Activated CD4-positive, alpha-beta T cell treated with anti-CD3 and anti-CD28 coated beads, Interleukin-2, amount 10 ng/mL, durations not matched to agents 7 days and 5 days (primary cell): ENCODE measurements at regions of chr1 and their contacts with region 1.

Region 1: DNA sequence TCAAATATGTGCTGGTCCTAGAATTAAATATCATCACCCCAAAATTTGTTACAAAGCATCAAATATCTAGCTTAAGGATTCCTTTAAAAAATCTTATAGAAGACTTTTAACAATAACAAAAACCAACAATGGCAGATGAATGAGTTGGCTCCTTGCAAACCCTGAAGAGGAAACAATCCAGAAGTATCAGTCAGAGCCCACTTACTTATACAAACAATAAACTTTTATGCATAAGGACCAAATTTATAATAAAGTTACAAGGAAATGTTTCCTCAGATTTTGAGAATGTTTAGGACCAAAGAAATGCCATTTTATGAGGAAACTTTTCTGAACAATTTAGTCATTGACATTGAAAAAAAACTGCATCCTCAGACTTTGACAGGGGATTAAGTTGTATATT is 52.7 kb downstream of the LPAR3 start:
- DNase-seq: no peak
- H3K4me3 Mint-ChIP-seq: no peak overlapping the region
- H3K27ac Mint-ChIP-seq: no peak overlapping the region
- H3K4me1 Mint-ChIP-seq: peaks cover 14% of the 10 kb centered on the region
- H3K27me3 Mint-ChIP-seq: peaks cover 15% of the 10 kb centered on the region

Region 2: DNA sequence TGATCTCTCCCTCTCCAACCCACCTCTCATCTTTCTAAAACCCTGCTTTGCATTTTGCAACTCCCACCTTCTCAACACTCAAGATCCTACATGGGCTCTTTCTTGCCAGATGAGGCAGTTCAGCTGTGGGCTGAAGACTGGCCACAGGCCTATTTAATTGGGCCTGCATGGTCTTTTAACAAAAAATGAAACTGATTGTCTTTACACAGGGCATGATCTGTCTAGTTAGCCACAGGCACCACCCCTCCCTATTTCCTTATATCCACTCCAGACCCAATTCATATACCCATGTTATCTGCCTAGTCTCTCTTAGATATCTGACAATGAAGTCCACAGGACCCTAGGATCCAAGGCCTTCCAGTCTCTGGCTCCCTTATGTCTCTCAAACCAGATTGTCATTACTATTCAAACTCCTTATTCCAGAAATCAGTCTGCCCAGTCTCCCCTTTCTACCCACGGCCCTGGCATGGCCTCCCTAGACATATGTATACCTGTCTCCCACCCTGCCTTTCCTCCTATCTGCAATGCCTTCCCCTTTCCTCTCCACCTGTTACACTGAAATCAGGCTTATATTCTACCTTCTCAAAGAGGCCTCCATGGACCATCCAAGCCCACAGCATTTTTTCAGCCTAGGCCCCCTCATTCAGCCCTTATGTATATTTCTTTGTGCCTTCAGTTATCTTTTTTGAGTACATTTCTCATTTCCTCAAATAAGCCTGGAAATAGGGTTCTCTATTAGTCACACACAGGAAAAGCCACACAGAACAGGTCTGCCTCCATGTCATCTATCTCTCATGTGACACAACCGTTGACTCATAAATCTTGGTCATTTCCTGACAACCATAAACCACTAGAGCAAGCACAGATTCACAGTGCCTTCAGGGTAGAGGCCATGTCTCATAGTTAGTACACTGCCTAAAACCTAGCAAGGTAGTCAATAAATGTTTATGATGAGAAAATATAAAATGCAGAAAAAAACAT is 13.7 kb after region 1 on chr1:
- CTCF ChIA-PET with region 1: interaction called, 11 read pairs
- POLR2A ChIA-PET with region 1: no interaction called
- DNase-seq: peak; percentile 65
- H3K4me3 Mint-ChIP-seq: no peak overlapping the region
- H3K27ac Mint-ChIP-seq: peak overlapping the region; percentile 84
- H3K4me1 Mint-ChIP-seq: peaks cover 38% of the 10 kb centered on the region
- H3K27me3 Mint-ChIP-seq: no peaks in the 10 kb centered on the region

Region 3: DNA sequence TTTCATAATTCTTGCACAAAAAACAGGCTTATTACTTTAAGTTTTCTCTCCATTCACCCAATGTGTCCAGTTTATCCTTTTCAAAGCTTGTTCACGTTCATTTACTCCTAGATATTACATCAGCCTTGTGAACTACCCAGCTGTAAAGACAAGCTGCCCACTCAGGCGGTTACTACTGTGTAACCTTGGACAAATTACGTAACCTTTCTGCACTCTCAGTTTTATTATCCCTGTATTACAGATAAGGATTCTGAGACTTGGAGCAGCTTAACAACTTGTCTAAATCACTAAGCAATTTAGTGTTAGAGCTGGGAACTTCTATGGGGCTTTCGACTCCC is 73.2 kb after region 1 on chr1:
- CTCF ChIA-PET with region 1: no interaction called
- POLR2A ChIA-PET with region 1: no interaction called
- DNase-seq: no peak
- H3K4me3 Mint-ChIP-seq: no peak overlapping the region
- H3K27ac Mint-ChIP-seq: no peak overlapping the region
- H3K4me1 Mint-ChIP-seq: no peaks in the 10 kb centered on the region
- H3K27me3 Mint-ChIP-seq: peaks cover 33% of the 10 kb centered on the region